ENCODE measurements at regions of chr11 and their contacts with region 1.

Region 1: DNA sequence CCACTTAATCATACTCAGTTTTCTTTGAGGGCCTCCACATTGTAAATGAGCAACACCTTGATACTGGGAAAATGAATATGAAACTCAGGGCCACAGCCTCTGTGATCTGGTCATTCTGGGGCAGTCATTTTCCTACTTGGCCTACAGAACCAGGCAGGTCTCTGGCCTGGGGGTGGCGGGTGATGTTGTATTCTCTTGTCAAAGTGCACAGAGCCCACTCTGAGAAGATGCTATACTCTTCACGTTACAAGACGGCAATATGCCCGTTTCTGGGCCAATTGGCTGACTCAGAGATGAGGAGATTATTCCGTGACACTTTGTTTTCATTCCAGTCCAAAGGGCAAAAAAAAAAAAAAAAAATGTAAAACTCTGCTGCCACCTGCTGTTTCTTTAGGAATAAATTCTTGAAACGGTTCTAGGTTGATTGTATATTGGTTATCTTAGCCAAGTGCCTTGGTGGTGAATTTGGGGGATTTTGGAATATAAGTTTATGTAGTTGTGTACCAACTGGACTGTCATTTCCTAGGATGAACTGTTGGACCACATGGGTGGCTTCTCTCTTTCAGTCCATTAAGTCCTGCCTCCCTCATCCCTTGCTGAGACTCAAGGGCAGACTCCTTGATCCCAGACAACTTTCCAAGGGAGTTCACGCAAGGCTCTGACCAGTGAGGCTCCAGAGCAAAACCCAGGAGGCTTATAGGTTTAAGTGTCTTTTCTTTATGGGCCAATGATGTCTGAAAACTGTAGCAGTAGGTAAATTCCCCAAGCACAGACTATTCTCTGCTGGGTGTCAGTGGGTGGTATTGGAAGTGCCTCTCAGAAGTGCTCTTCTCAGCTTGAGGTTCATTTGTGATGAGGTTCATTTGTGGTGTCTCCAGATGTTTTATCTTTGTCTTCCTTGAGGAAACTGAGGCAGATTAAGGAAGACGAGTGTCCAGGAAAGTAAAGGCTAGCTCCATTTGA is 18.2 kb downstream of the ADM start:
- DNase-seq: no peak
- H3K4me3 ChIP-seq: no peak overlapping the region
- H3K27ac ChIP-seq: peak overlapping the region; percentile 42
- H3K4me1 ChIP-seq: peaks cover 24% of the 10 kb centered on the region
- H3K27me3 ChIP-seq: no peaks in the 10 kb centered on the region
- CTCF ChIP-seq: peak in 2 of 3 experiments; percentile 58 to 70
- POLR2A ChIP-seq: no peak

Region 2: GRCh38 chr11:10379022-10379421 is 55.9 kb after region 1 on chr11:
- intact Hi-C with region 1: loop called (anchors 10 kb)
- DNase-seq: peak in 1 of 2 donors; percentile 32
- H3K4me3 ChIP-seq: no peak overlapping the region
- H3K27ac ChIP-seq: no peak overlapping the region
- H3K4me1 ChIP-seq: peaks cover 7% of the 10 kb centered on the region
- H3K27me3 ChIP-seq: no peaks in the 10 kb centered on the region
- CTCF ChIP-seq: no peak
- POLR2A ChIP-seq: no peak

Measured in vagina (tissue), 2 donors.